Activated CD4-positive, alpha-beta T cell treated with anti-CD3 and anti-CD28 coated beads, Interleukin-2, amount 10 ng/mL, durations not matched to agents 7 days and 5 days (primary cell): ENCODE measurements at regions of chr12 and their contacts with region 1.

Region 1: DNA sequence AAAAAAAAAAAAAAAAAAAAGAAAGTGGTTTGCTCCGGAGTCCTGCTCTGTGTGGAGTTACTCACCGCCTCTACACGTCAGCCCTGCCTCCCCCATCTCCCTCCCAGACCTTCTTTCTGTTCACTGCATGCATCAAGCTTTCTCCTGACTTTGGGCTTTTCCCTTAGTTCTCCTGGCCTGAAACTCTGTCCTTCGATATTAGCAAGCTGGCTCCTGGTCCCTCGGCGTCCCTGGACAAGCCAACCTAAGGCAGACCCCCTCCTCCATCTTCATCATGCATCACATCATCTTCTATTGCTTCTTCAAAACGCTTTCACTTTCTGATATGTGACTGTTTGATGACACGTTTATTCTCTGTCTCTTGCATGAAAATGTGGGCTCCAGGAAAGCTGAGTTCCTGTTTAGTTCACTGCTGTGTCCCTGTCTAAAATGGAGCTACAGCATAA is 40.6 kb downstream of the SLC15A4 start:
- DNase-seq: peak; percentile 35
- H3K4me3 Mint-ChIP-seq: peak overlapping the region; percentile 72
- H3K27ac Mint-ChIP-seq: peak overlapping the region; percentile 98
- H3K4me1 Mint-ChIP-seq: peaks cover 13% of the 10 kb centered on the region
- H3K27me3 Mint-ChIP-seq: no peaks in the 10 kb centered on the region

Region 2: GRCh38 chr12:128761379-128761790 is 21.8 kb before region 1 on chr12:
- CTCF ChIA-PET with region 1: no interaction called
- POLR2A ChIA-PET with region 1: no interaction called
- DNase-seq: no peak
- H3K4me3 Mint-ChIP-seq: no peak overlapping the region
- H3K27ac Mint-ChIP-seq: no peak overlapping the region
- H3K4me1 Mint-ChIP-seq: no peaks in the 10 kb centered on the region
- H3K27me3 Mint-ChIP-seq: no peaks in the 10 kb centered on the region

Region 3: GRCh38 chr12:128794661-128795529 is 11.7 kb after region 1 on chr12:
- CTCF ChIA-PET with region 1: interaction called, 10 read pairs
- POLR2A ChIA-PET with region 1: no interaction called
- DNase-seq: no peak
- H3K4me3 Mint-ChIP-seq: no peak overlapping the region
- H3K27ac Mint-ChIP-seq: peak overlapping the region; percentile 82
- H3K4me1 Mint-ChIP-seq: peaks cover 37% of the 10 kb centered on the region
- H3K27me3 Mint-ChIP-seq: no peaks in the 10 kb centered on the region